GM10248 (cell line): ENCODE measurements at regions of chr14 and their contacts with region 1.

Region 1: DNA sequence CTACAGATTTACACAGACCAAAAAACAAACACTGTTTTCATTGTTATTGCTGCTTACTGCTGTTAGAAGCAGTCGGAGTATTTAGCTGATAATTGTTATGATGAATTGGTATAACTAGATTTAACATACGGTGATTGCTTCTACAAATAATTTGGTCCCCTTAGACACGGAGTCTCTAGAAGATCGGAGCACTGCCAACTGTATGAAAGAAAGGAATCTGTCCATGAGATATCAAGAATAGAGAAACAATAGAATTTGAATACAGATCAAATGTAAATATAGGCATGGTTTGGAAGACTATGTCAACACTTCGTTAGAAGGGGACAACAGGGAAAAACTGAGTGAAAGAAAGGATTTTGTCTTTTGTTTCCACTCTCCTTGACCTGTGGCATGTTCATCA is 110.9 kb downstream of the PPP2R5E start:
- DNase-seq: no peak
- CTCF ChIP-seq: no peak

Region 2: DNA sequence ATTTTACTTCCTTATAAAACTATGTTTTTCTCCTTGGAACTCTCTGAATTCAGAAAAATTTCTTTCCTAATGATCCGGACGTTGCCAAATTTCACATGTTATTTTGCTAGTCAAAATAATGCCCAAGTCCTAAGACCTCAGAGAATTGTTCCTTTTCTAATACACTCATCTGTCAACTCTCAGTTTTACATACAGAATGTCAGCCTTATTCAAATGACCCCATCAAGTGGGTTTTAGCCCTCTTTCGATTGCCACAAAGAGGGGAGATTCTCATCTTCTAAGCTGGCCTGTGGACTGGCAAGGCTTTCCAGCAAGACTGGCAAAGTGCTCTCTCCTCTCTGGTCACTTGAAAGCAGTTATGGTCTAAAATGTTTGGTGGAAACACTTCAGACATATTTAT is 14.2 kb before region 1 on chr14:
- CTCF ChIA-PET with region 1: no interaction called
- POLR2A ChIA-PET with region 1: no interaction called
- DNase-seq: no peak
- CTCF ChIP-seq: no peak

Region 3: DNA sequence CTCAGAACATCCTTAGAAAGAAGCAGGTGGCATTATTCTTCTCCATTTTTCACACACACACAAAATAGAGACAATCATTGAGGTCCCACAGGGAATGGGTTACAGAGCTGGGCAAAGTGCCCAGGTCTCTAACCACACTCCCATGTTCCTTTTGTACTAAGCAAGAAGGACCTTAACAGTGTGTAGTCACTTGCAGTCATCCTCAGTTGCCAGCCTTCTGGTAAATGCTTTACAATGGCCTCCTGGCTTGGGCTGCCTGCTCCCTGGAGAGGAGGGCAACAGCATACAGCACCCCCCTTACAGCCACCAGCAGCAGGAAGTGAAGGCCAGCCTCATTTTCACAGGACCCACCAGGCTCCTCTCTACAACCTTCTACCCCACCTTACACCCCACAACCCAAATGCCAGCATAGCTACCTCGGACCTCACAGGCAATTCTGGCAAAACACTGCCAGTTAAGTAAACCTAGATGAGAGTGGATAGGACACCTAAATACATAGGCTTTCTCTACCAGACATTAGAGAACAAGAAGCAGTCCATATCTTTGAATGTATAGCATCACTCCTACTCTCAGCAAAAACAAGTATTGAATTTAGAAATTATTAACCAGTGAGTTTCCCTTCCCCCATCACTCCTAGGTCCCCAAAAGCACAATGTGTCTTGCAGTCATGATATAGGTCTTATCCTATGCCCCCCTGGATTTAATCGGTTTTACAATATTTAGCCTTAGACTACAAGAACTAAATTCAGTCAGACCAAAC is 22.8 kb after region 1 on chr14:
- CTCF ChIA-PET with region 1: interaction called, 10 read pairs
- POLR2A ChIA-PET with region 1: no interaction called
- DNase-seq: no peak
- CTCF ChIP-seq: no peak

Region 4: GRCh38 chr14:63610329-63610728 is 178.1 kb after region 1 on chr14:
- CTCF ChIA-PET with region 1: no interaction called
- POLR2A ChIA-PET with region 1: no interaction called
- DNase-seq: no peak
- CTCF ChIP-seq: no peak